ENCODE measurements at regions of chr2 and their contacts with region 1.

Region 1: DNA sequence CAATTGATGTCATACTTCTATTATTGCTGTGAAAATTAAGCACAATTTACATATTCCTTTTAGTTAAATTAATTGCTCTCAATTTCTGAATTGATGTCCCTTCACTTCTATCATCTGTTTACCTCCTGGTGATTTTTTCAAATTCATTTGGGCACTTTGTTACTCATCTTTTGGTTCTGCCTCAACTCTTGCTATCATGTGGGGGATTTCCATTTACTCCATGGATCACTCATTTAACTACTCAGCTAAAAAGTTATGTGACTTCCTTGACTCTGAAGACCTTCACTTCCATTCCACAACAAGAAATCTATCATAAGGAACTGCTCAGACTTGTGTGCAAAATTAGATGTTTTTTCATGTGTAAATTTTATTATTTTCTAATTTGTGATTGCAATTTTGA is 126.2 kb downstream of the EHBP1 start:
- DNase-seq: no peak
- H3K4me3 Mint-ChIP-seq: no peak overlapping the region
- H3K27ac Mint-ChIP-seq: peak overlapping the region; percentile 25
- H3K4me1 Mint-ChIP-seq: peaks cover 6% of the 10 kb centered on the region
- H3K27me3 Mint-ChIP-seq: no peaks in the 10 kb centered on the region

Region 2: DNA sequence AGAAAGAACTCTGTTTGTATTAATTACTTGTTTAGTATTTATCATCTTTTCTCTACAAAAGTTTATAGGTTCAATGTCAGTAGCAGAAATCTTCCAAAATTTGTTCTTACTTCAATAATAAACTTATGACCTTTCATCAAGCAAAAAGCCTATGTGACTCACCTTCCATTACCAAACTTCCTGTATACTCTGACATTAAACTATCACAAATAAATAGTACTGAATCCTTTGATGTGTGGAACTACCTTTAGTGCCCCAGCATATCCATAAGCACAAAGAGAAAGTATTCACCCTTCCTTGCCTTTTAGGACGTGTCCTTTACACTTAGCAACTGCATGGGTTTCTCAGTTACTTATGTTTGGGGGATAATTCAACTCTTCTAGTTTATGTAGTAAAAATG is 39.8 kb after region 1 on chr2:
- intact Hi-C with region 1: loop called (anchors 5 kb)
- DNase-seq: no peak
- H3K4me3 Mint-ChIP-seq: no peak overlapping the region
- H3K27ac Mint-ChIP-seq: peak overlapping the region; percentile 2
- H3K4me1 Mint-ChIP-seq: peaks cover 11% of the 10 kb centered on the region
- H3K27me3 Mint-ChIP-seq: no peaks in the 10 kb centered on the region

Region 3: GRCh38 chr2:62920070-62920469 is 88.3 kb after region 1 on chr2:
- intact Hi-C with region 1: no loop called
- DNase-seq: no peak
- H3K4me3 Mint-ChIP-seq: no peak overlapping the region
- H3K27ac Mint-ChIP-seq: no peak overlapping the region
- H3K4me1 Mint-ChIP-seq: no peaks in the 10 kb centered on the region
- H3K27me3 Mint-ChIP-seq: no peaks in the 10 kb centered on the region